Heart right ventricle (tissue), 16 donors: ENCODE measurements at regions of chr3 and their contacts with region 1.

Region 1: DNA sequence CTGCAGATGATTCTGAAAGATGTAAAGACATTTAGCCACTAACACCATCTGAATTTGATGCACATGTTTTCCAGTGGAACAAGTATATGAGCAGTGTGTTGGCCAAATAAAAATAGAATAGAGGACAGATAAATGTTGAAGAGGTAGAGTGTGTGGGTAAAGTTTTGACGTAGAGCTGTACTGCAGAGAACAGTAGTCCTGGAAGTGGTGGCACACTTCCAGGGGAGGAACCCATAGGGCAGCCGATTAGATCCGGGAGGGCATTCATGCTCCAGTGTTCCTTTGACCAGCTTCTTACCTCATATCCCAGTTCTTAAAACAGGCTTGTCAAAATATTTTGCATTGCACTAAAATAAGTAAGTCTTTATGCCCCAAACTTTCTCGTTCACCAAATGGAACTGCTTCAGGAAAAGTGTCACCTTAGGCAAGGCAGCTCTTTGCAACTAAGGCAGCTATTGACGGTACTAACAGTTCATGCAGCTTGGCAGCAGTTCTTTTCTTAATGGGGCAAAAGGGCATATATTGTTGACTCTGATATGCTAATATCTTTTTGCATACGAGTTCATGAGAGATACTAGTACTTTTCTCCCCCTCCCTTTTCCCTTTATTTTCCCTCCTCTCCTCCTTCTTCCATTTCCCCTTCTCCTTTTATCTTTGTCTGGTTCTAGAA is 429.3 kb upstream of the AZI2 start:
- DNase-seq: peak; percentile 10 to 15
- ATAC-seq: peak in 6 of 8 donors; percentile 57 to 98 (median 96)
- H3K4me3 ChIP-seq: peak overlapping the region in 1 of 10 donors; percentile 5
- H3K27ac ChIP-seq: peak overlapping the region in 6 of 10 donors; percentile 21 to 73 (median 56)
- H3K4me1 ChIP-seq: peaks cover 0 to 19% (median 0%) of the 10 kb centered on the region in 9 donors
- H3K27me3 ChIP-seq: no peaks in the 10 kb centered on the region
- CTCF ChIP-seq: no peak

Region 2: DNA sequence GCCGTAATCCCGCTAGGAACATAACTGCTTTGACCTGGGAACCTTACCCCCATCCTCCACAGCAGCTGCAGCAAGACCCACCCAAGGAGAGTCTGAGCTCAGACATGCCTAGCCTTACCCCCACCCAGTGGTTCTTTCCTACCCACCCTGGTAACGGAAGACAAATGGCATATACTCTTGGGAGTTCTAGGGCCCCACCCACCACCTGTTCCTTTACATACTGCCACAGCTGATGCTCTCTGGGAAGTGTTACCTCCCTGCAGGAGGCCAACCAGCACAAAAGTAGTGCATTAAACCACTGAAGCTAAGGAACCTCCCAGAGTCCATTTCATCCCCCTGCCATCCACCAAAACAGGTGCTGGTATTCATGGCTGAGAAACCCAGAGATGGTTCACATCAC is 378.7 kb before region 1 on chr3:
- intact Hi-C with region 1: no loop called
- DNase-seq: no peak
- ATAC-seq: no peak
- H3K4me3 ChIP-seq: no peak overlapping the region
- H3K27ac ChIP-seq: no peak overlapping the region
- H3K4me1 ChIP-seq: no peaks in the 10 kb centered on the region
- H3K27me3 ChIP-seq: no peaks in the 10 kb centered on the region
- CTCF ChIP-seq: no peak

Region 3: GRCh38 chr3:28743831-28744230 is 34.1 kb before region 1 on chr3:
- intact Hi-C with region 1: loop called in 1 of 10 experiments (anchors 5 kb)
- DNase-seq: no peak
- ATAC-seq: no peak
- H3K4me3 ChIP-seq: no peak overlapping the region
- H3K27ac ChIP-seq: peak overlapping the region in 8 of 10 donors; percentile 42 to 88 (median 78)
- H3K4me1 ChIP-seq: peaks cover 0 to 34% (median 17%) of the 10 kb centered on the region in 9 donors
- H3K27me3 ChIP-seq: no peaks in the 10 kb centered on the region
- CTCF ChIP-seq: no peak